Activated naive CD4-positive, alpha-beta T cell treated with anti-CD3 and anti-CD28 coated beads for 36 hours (primary cell): ENCODE measurements at regions of chr1 and their contacts with region 1.

Region 1: DNA sequence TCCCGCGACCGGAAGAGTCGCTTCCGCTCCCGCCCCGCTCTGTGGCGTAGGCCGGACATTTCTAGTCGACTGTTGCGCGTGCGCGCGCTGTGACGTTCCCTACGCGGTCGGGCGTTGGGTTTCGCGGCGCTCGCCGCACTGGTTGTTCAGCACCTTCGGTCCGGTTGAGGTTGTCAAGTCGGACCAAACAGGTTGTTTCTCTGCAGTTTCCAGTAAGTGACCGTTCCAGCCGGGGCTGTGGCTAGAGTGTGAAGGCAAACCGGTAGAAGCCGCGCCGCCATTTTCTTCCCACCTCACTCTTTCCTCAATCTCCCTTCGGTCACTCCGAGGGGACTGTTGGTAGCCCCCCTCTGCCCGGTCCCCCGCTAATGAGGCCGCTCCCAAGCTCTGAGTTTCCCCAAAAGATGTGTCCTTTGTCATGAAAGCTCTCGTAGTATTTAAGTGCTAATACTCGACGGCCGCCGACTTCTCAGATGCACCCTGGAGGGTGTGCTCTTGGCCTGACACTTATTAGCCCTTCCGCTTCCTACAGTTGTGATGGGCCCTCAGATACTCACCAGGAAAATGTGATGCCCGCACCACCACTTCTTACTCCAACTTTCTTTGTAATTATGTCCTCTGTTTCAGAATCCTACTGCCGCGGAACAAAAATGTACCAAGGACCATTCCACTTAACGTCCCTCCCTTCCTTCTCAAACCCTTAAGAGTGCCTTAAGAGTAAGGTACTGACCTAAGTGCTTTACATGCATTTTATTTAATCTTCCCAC is 56.3 kb downstream of the TRAF5 start:
- DNase-seq: peak; percentile 80
- H3K4me3 Mint-ChIP-seq: peak overlapping the region; percentile 89
- H3K27ac Mint-ChIP-seq: peak overlapping the region; percentile 92
- H3K4me1 Mint-ChIP-seq: peaks cover 40% of the 10 kb centered on the region
- H3K27me3 Mint-ChIP-seq: no peaks in the 10 kb centered on the region

Region 2: DNA sequence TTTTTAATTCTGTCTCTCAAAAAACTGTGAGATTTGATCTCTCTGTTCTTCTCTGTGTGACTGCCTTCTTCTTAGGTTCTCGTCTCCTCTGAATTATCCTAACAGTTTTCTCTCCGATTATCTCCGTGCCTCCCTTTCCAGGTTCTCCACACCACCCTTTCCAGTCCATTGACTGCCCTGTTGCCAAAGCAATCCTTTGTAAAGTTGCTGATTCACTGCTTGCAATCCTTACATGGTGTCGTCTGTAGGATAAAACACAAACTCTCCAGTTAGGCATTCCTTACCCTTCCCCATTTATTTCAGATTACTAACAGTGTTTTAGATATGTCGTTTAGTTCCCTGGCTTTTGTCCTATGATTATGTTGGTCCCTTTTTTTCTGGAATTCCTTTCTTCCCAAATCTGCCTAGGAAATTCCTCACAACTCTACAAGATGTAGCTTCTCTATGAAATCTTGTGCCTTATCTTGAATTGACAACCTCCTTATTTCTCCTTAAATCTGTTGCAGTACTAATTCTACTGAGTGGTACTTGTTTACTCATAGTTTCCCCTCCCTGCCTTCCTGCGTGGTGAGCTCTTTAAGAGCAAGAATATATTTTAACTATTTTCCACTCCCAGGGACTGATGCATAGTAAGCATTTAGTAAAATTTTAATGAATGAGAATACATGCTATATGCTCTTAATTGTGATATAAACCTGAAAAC is 101.4 kb before region 1 on chr1:
- CTCF ChIA-PET with region 1: no interaction called
- intact Hi-C with region 1: no loop called
- DNase-seq: no peak
- H3K4me3 Mint-ChIP-seq: no peak overlapping the region
- H3K27ac Mint-ChIP-seq: no peak overlapping the region
- H3K4me1 Mint-ChIP-seq: peaks cover 2% of the 10 kb centered on the region
- H3K27me3 Mint-ChIP-seq: no peaks in the 10 kb centered on the region

Region 3: GRCh38 chr1:211335522-211336157 is 47.3 kb before region 1 on chr1:
- CTCF ChIA-PET with region 1: no interaction called
- intact Hi-C with region 1: loop called (anchors 2 kb)
- DNase-seq: peak; percentile 42
- H3K4me3 Mint-ChIP-seq: peak overlapping the region; percentile 49
- H3K27ac Mint-ChIP-seq: peak overlapping the region; percentile 85
- H3K4me1 Mint-ChIP-seq: peaks cover 84% of the 10 kb centered on the region
- H3K27me3 Mint-ChIP-seq: no peaks in the 10 kb centered on the region

Region 4: DNA sequence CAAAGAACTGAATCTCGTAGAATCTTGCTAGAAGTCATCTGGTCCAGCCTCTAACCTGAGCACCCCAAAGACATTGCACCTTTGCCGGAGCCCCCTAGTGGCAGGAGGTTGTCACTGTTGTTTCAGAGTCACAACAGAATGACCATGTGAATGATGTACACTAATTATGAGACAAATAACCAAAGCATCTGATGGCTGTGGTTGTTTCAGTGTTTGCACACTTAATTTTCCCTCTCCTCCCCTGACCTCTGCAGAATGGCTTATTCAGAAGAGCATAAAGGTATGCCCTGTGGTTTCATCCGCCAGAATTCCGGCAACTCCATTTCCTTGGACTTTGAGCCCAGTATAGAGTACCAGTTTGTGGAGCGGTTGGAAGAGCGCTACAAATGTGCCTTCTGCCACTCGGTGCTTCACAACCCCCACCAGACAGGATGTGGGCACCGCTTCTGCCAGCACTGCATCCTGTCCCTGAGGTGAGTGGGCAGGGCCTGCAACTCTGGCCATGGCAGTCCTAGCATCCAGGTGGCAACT is 29.8 kb before region 1 on chr1:
- CTCF ChIA-PET with region 1: no interaction called
- intact Hi-C with region 1: loop called (anchors 2 kb)
- DNase-seq: peak; percentile 70
- H3K4me3 Mint-ChIP-seq: peak overlapping the region; percentile 15
- H3K27ac Mint-ChIP-seq: peak overlapping the region; percentile 83
- H3K4me1 Mint-ChIP-seq: peaks cover 62% of the 10 kb centered on the region
- H3K27me3 Mint-ChIP-seq: no peaks in the 10 kb centered on the region

Region 5: GRCh38 chr1:211420389-211420788 is 37.5 kb after region 1 on chr1:
- CTCF ChIA-PET with region 1: no interaction called
- intact Hi-C with region 1: loop called (anchors 2 kb)
- DNase-seq: peak; percentile 9
- H3K4me3 Mint-ChIP-seq: no peak overlapping the region
- H3K27ac Mint-ChIP-seq: no peak overlapping the region
- H3K4me1 Mint-ChIP-seq: peaks cover 16% of the 10 kb centered on the region
- H3K27me3 Mint-ChIP-seq: no peaks in the 10 kb centered on the region

Region 6: GRCh38 chr1:211476200-211476849 is 93.4 kb after region 1 on chr1:
- CTCF ChIA-PET with region 1: interaction called, 4 read pairs
- intact Hi-C with region 1: loop called (anchors 1 kb)
- DNase-seq: peak; percentile 90
- H3K4me3 Mint-ChIP-seq: no peak overlapping the region
- H3K27ac Mint-ChIP-seq: no peak overlapping the region
- H3K4me1 Mint-ChIP-seq: no peaks in the 10 kb centered on the region
- H3K27me3 Mint-ChIP-seq: peaks cover 16% of the 10 kb centered on the region

Region 7: DNA sequence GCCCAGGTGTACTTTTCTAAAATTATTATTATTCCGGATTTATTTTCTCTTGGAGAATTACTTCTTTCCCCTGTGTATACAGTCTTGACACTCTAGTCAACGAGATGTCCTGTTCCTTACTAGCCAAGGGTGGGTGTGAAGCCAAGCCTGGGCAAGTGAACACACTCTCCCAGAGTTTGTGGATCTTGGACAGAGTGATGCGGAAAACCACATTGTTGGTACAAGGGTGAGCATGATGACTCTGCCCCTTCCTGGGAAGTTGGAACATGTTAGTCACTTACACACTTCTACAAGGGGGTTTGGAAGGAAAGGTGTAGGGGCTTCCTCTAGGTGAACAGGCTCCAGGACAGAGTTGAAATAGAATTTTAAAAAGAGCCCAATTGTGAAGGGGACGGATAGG is 129.1 kb after region 1 on chr1:
- CTCF ChIA-PET with region 1: no interaction called
- intact Hi-C with region 1: no loop called
- DNase-seq: no peak
- H3K4me3 Mint-ChIP-seq: no peak overlapping the region
- H3K27ac Mint-ChIP-seq: no peak overlapping the region
- H3K4me1 Mint-ChIP-seq: peaks cover 22% of the 10 kb centered on the region
- H3K27me3 Mint-ChIP-seq: no peaks in the 10 kb centered on the region